GM12878 (cell line): ENCODE measurements at regions of chr14 and their contacts with region 1.

Region 1: DNA sequence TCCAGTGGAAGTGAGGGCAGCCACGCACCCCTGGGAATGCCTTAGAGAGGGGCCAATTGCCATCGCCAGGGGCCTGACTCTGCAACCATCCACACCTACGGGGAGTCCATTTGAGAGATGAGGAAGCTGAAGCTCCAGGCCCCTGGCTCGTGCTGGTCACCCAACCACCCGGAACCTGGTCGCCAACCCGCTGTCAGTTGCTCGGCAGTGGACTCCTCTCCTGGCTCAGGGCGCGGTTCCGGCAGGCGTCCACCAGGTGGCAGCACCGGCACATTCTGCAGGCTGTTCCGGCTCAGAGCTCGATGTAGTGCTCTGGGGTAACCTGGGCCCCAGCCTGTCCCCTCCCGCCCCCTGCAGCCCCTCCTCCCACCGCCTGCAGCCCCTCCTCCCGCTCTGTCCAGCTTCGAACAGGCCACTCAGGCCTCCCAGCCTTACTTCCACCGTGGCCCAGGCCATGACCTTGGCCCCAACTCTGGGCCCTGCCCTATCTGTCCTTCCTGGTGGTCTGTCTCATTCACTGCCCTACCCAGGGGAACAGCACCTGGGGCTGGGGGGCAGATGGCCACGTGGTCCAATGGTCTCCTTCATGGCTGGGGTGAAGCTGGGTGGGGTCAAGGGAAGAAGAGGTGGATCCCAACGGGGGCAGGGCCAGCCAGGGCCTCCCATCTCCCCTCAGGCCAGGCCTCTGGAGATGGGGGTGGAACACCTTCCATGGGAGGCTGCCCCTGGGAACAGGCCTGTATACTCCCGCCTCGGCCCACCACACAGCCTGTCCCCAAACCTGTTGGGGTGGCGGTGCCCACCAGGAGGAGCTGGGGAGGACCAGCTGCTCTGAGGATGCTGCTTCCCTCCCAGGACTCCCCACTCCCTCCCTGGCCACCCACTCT is 15.7 kb downstream of the SIVA1 start:
- DNase-seq: peak; percentile 28
- ATAC-seq: peak; percentile 99
- H3K4me3 ChIP-seq: no peak overlapping the region
- H3K27ac ChIP-seq: no peak overlapping the region
- H3K4me1 ChIP-seq: no peaks in the 10 kb centered on the region; the same call in 1 of the 2 replicates
- H3K27me3 ChIP-seq: no peaks in the 10 kb centered on the region
- CTCF ChIP-seq: peak; percentile 76 to 97 (median 93)
- EP300 ChIP-seq: no peak
- POLR2A ChIP-seq: peak; percentile 41
- RAD21 ChIP-seq: peak; percentile 80

Region 2: DNA sequence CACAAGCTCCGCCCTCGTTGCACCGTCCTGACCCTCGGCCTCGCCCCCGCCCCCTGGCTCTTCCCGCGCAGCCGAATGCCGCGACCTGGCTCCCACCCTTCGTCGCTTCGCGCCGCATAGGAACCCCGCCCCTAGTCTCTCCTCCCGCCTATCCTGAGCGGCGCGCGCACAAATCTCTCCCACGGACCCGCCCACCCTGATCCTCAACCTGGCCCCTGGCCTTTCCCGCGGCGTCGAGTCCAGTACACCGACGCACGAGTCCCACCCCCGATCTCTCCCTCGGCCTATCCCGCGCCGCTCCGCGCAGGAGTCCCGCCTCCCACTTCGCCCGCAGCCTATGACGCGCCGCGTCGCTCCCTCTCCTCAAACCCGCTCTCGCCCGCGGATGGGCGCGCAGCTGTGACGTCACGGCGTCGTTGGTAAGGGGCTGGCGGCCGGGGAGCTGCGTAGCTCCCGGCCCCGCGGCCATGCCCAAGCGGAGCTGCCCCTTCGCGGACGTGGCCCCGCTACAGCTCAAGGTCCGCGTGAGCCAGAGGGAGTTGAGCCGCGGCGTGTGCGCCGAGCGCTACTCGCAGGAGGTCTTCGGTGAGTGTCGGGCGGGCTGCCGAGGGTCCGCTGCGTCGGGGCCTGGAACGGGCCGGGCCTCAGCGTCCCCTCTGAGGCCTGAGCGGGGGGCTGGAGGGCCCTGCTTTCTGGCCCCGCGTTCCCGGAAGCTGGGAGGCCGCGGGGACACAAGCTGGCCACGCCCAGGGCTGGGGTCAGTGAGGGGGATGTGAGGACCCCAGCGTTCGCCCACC is 15.7 kb before region 1 on chr14 and contains the start of gene SIVA1:
- CTCF ChIA-PET with region 1: interaction called, 13 read pairs
- POLR2A ChIA-PET with region 1: interaction called, 3 read pairs
- RAD21 ChIA-PET with region 1: interaction called, 8 read pairs
- SMC1A ChIA-PET with region 1: interaction called, 5 read pairs
- in situ Hi-C with region 1: no loop called
- intact Hi-C with region 1: no loop called
- DNase-seq: peak; percentile 98
- ATAC-seq: peak; percentile 96
- H3K4me3 ChIP-seq: peak within 1 kb of the TSS; percentile 94
- H3K27ac ChIP-seq: peak within 1 kb of the TSS; percentile 82
- H3K4me1 ChIP-seq: peaks cover 17% of the 10 kb centered on the region
- H3K27me3 ChIP-seq: no peaks in the 10 kb centered on the region
- CTCF ChIP-seq: no peak
- EP300 ChIP-seq: no peak
- POLR2A ChIP-seq: peak; percentile 98
- RAD21 ChIP-seq: no peak
- polyA plus RNA-seq, gene SIVA1: 4.6 to 30.6 TPM

Region 3: DNA sequence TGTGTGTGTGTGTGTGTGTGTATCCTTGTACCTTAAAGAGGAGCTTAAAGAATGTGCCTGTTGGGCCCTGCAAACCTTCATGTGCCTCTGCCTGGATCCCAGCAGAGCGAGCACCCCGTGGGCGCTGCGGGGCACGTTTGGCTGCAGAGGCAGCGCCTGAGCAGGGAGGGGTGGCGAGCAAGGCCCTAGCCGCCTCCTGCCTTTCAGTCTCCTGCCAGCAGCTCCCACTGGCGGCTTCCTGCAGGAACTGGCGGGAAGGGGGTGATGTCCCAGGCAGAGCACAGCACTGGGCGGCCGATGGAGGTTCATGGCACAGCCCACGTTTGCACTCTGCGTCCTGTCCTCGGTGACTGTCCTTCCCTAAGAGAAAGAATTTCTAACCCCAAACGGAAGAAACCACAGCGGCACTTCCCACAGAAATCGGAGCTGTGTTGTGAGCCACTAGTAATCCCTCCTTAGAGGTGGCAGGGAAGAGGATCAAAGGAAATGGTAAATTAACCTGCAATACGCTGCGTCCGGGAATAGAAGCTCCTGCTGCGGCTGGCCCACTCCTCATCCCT is 52.1 kb after region 1 on chr14:
- CTCF ChIA-PET with region 1: interaction called, 48 read pairs
- POLR2A ChIA-PET with region 1: interaction called, 5 read pairs
- RAD21 ChIA-PET with region 1: interaction called, 33 read pairs
- SMC1A ChIA-PET with region 1: interaction called, 6 read pairs
- in situ Hi-C with region 1: loop called (anchors 5 kb)
- intact Hi-C with region 1: no loop called
- DNase-seq: no peak
- ATAC-seq: no peak
- H3K4me3 ChIP-seq: no peak overlapping the region
- H3K27ac ChIP-seq: no peak overlapping the region
- H3K4me1 ChIP-seq: 0 out of 2 replicates have a peak, but pooled peaks cover under 1% of the 10 kb centered on the region
- H3K27me3 ChIP-seq: no peaks in the 10 kb centered on the region
- CTCF ChIP-seq: no peak
- EP300 ChIP-seq: no peak
- POLR2A ChIP-seq: no peak
- RAD21 ChIP-seq: no peak

Region 4: DNA sequence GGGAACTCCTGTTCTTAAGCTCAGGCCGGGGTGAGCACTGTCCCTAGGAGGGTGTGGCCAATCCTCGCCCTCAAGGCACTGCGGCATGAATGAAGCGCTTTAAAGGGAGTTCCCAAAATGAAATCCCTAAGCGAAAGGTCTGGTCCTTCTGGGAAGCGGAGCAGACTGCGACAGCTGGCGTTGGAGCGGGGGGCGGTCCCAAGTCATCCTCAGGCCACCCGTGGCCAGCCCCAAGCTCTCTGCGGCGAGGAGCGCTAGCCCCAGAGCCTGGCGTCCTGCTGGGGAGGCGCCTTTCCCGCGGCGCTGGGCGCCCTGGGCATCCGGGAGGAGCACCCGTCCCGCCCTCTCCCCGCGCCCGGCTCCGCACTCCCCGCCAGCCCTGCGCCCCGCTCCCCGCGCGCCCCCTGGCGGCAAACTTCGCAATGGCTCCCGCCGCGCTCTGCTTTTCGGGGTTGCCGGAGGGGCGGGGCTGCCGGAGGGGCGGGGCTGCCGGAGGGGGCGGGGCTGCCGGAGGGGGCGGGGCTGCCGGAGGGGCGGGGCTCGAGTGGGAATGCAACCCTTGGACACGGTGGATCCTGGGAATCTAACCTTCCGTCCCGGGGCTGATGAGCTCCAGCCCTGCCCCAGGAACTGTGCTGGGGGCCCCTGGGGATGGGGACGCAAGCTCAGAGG is 57.6 kb after region 1 on chr14:
- CTCF ChIA-PET with region 1: interaction called, 48 read pairs
- POLR2A ChIA-PET with region 1: interaction called, 5 read pairs
- RAD21 ChIA-PET with region 1: interaction called, 33 read pairs
- SMC1A ChIA-PET with region 1: interaction called, 6 read pairs
- in situ Hi-C with region 1: loop called (anchors 5 kb)
- intact Hi-C with region 1: loop called (anchors 1 kb)
- DNase-seq: no peak
- ATAC-seq: peak; percentile 97
- H3K4me3 ChIP-seq: peak overlapping the region; percentile 71; the same call in 1 of the 2 replicates
- H3K27ac ChIP-seq: no peak overlapping the region
- H3K4me1 ChIP-seq: peaks cover 5% of the 10 kb centered on the region; the same call in 1 of the 2 replicates
- H3K27me3 ChIP-seq: peaks cover 0 to 3% of the 10 kb centered on the region in 2 experiments; a peak in 1 of 4 replicates
- CTCF ChIP-seq: peak; percentile 43 to 73 (median 60); a peak in 5 of 6 replicates
- EP300 ChIP-seq: no peak
- POLR2A ChIP-seq: no peak
- RAD21 ChIP-seq: peak; percentile 80

Region 5: GRCh38 chr14:104870420-104871144 is 101.9 kb after region 1 on chr14:
- CTCF ChIA-PET with region 1: no interaction called
- POLR2A ChIA-PET with region 1: no interaction called
- RAD21 ChIA-PET with region 1: no interaction called
- SMC1A ChIA-PET with region 1: no interaction called
- in situ Hi-C with region 1: no loop called
- intact Hi-C with region 1: loop called (anchors 1 kb)
- DNase-seq: no peak
- ATAC-seq: peak; percentile 70
- H3K4me3 ChIP-seq: no peak overlapping the region
- H3K27ac ChIP-seq: no peak overlapping the region
- H3K4me1 ChIP-seq: no peaks in the 10 kb centered on the region
- H3K27me3 ChIP-seq: peaks cover 0 to 2% of the 10 kb centered on the region in 2 experiments; a peak in 3 of 4 replicates
- CTCF ChIP-seq: peak; percentile 11 to 51 (median 13); a peak in 4 of 6 replicates
- EP300 ChIP-seq: no peak
- POLR2A ChIP-seq: no peak
- RAD21 ChIP-seq: no peak